Activated CD4-positive, alpha-beta T cell treated with anti-CD3 and anti-CD28 coated beads for 36 hours (primary cell): ENCODE measurements at regions of chr16 and their contacts with region 1.

Region 1: GRCh38 chr16:23149349-23149996 is at the start of gene USP31:
- DNase-seq: peak; percentile 94
- ATAC-seq: peak; percentile 99
- H3K4me3 Mint-ChIP-seq: peak within 1 kb of the TSS; percentile 86
- H3K27ac Mint-ChIP-seq: peak within 1 kb of the TSS; percentile 86
- H3K4me1 Mint-ChIP-seq: peaks cover 28% of the 10 kb centered on the region
- H3K27me3 Mint-ChIP-seq: no peaks in the 10 kb centered on the region
- total RNA-seq, gene USP31: 5.3 to 5.9 TPM

Region 2: DNA sequence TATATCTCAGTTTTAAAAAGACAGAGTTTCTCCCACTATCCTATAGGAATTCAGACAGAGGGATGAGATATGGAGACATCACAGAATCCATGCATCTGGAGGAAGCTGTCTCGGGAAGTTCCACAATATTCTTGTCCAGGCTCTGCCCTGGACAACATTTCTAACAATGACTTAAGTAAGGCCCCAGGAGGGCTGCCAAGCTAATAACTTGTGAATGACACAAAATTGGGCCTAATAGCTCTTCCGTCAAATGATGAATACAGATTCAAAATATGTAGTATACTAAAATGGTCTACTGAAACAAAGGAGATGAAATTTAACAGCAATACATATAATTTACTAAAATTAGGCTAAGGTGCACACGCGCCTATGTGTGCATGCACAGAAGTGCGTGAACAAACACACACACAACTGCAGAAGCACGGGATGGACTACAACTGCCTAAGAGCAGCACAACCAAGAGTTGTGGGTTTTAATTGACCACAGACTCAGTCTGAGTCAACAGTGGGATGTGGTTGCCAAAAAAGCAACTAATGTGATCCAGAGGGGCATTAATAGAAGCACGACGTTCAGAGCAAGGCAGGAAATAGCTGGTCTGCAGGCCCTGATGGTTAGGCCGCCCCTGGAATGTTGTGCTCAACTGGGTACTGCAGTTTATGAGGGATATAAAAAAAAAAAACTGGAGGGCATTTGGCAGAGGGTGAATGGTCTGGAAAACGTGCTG is 361.8 kb before region 1 on chr16:
- CTCF ChIA-PET with region 1: no interaction called
- POLR2A ChIA-PET with region 1: no interaction called
- intact Hi-C with region 1: no loop called
- DNase-seq: no peak
- ATAC-seq: no peak
- H3K4me3 Mint-ChIP-seq: no peak overlapping the region
- H3K27ac Mint-ChIP-seq: no peak overlapping the region
- H3K4me1 Mint-ChIP-seq: no peaks in the 10 kb centered on the region
- H3K27me3 Mint-ChIP-seq: peaks cover 21% of the 10 kb centered on the region

Region 3: DNA sequence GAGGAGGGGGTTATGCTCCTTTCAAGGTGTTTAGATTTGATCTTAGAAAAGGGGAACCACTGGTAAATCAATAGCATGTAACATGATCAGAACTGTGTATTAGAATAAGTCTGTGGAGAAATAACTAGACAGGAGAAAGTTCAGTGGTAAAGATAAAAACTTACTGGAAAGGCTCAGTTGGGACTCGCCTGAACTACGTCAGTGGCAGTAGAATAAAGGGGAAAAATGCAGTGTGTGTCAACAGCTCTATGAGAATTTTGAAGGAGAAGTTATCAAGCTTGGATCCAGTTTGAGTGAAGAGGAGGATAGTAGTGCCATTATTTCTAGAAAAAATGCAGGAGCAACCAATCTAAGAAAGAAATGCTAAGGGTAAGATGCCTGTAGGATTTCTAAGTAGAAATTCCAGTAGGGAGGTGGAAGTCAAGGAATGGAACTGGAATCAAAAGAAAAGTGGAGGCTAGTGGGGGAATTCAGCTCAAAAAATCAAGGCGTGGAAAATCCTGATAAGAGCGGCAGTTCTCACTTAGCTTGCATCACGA is 48.4 kb before region 1 on chr16:
- CTCF ChIA-PET with region 1: no interaction called
- POLR2A ChIA-PET with region 1: no interaction called
- intact Hi-C with region 1: loop called in 1 of 2 experiments (anchors 2 kb)
- DNase-seq: no peak
- ATAC-seq: no peak
- H3K4me3 Mint-ChIP-seq: no peak overlapping the region
- H3K27ac Mint-ChIP-seq: no peak overlapping the region
- H3K4me1 Mint-ChIP-seq: peaks cover 15% of the 10 kb centered on the region
- H3K27me3 Mint-ChIP-seq: no peaks in the 10 kb centered on the region

Region 4: GRCh38 chr16:23182460-23183309 is 33.2 kb after region 1 on chr16 and contains the start of gene SCNN1G:
- CTCF ChIA-PET with region 1: no interaction called
- POLR2A ChIA-PET with region 1: no interaction called
- intact Hi-C with region 1: loop called in 1 of 2 experiments (anchors 1 kb)
- DNase-seq: peak; percentile 90
- ATAC-seq: peak; percentile 99
- H3K4me3 Mint-ChIP-seq: peak within 1 kb of the TSS; percentile 45
- H3K27ac Mint-ChIP-seq: no peak within 1 kb of the TSS
- H3K4me1 Mint-ChIP-seq: peaks cover 8% of the 10 kb centered on the region
- H3K27me3 Mint-ChIP-seq: peaks cover 51% of the 10 kb centered on the region
- total RNA-seq, gene SCNN1G: not detected

Region 5: GRCh38 chr16:23510164-23510914 is 360.9 kb after region 1 on chr16 and contains the start of gene GGA2:
- CTCF ChIA-PET with region 1: no interaction called
- POLR2A ChIA-PET with region 1: no interaction called
- intact Hi-C with region 1: loop called in 1 of 2 experiments (anchors 1 kb)
- DNase-seq: peak; percentile 88
- ATAC-seq: peak; percentile 87
- H3K4me3 Mint-ChIP-seq: peak within 1 kb of the TSS; percentile 89
- H3K27ac Mint-ChIP-seq: peak within 1 kb of the TSS; percentile 78
- H3K4me1 Mint-ChIP-seq: peaks cover 48% of the 10 kb centered on the region
- H3K27me3 Mint-ChIP-seq: no peaks in the 10 kb centered on the region
- total RNA-seq, gene GGA2: 86.7 to 114 TPM